ENCODE measurements at regions of chr15 and their contacts with region 1.

Region 1: DNA sequence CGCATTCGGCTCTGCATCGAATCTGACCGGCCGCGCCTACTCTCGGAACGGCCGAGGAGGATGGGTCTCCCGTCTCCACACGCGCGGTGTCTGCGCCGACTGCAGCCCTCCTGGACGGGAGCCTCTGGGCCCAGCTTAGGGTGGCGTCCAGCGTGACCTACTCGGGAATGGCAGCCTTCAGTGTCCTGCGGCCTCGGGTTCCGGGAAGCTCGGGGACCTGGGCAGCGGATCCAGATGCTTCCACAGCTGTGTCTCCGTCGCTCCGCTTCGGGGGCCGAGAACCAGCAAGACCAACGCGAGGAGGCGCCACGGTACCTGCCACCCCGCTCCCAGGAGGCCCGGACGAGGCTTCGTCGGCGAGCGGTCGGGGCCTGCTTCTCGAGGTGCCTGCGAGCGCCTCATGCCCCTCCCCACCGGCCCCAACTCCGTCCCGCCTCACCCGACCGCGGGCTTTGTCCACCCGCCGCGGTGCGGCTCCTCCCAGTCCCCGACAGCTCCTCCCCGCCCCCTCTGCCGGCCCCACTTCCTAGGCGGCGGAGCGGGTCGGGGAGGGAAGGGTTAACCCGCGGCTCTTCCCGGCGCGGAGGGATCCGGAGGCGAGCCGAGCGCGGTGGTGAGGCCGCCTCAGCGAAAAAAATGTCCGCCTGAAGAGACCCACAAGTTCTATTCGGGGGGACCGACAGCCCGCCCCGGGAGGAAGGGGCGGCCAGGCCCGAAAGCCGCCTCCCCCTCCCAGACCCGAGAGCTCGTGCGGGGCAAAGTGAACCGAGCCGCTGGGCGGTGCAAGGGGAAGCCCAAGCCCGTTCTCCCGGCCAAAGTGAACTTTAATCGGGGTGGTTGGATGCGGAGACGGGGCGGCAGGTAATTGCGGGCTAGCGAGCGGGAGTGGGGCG is at the start of gene TCF12:
- DNase-seq: peak; percentile 78 to 95 (median 84)
- ATAC-seq: peak; percentile 75
- H3K4me3 ChIP-seq: peak within 1 kb of the TSS; percentile 82
- H3K4me3 Mint-ChIP-seq: peak within 1 kb of the TSS; percentile 95
- H3K27ac ChIP-seq: peak within 1 kb of the TSS; percentile 68 to 71
- H3K27ac Mint-ChIP-seq: peak within 1 kb of the TSS; percentile 91
- H3K4me1 ChIP-seq: peaks cover 28% of the 10 kb centered on the region
- H3K4me1 Mint-ChIP-seq: peaks cover 49% of the 10 kb centered on the region
- H3K27me3 ChIP-seq: no peaks in the 10 kb centered on the region
- H3K27me3 Mint-ChIP-seq: no peaks in the 10 kb centered on the region
- CTCF ChIP-seq: peak; percentile 56
- total RNA-seq, gene TCF12: 54.0 TPM

Region 2: DNA sequence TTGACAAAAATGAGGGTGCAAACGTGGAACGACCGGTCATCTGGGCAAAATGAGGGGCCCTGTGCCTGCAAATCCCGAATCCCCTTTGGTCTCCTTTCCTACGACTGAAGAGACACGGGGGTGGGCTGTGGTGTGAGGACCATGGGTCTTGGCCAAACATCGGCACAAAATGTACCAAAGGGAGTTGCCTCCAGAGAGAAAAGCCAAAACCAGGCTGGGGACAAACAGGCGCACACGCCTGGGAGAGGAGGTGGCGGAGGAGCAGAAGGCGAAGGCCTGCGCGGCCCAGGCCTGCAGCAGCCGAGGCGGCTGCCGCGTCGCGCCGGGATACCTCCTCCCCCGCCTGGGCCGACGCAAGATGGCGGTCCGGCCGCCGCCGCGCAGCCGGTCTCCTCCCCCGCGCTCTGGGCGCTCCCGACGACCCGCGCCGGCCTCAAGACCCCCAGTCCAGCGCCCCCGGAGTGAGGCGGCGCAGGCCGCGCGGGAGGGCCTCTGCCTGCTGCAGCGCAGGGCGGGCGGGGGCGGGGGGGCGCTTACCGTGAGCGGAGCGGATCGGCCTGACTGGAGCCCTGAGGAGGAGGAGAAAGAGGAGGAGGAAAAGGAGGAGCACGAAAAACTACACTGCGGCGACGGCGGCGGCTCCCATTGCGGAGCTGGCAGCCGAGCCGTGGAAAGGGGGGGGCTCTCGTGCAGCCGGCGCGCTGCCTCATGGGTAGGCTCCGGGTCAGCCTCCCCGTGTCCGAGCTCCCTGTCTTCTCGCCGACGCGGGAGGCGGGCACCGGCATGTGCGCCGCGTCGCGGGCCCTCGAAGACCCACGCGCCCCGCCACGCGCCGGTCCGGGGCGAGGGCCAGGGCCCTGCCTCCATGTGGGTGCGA is 185.1 kb before region 1 on chr15 and contains the start of gene ZNF280D:
- CTCF ChIA-PET with region 1: no interaction called
- POLR2A ChIA-PET with region 1: interaction called, 13 read pairs
- intact Hi-C with region 1: loop called in 1 of 2 experiments (anchors 10 kb)
- DNase-seq: peak; percentile 65 to 91 (median 74)
- ATAC-seq: peak; percentile 87
- H3K4me3 ChIP-seq: peak within 1 kb of the TSS; percentile 79
- H3K4me3 Mint-ChIP-seq: peak within 1 kb of the TSS; percentile 89
- H3K27ac ChIP-seq: peak within 1 kb of the TSS in 1 of 2 donors; percentile 48
- H3K27ac Mint-ChIP-seq: peak within 1 kb of the TSS; percentile 92
- H3K4me1 ChIP-seq: peaks cover 27% of the 10 kb centered on the region
- H3K4me1 Mint-ChIP-seq: peaks cover 42% of the 10 kb centered on the region
- H3K27me3 ChIP-seq: no peaks in the 10 kb centered on the region
- H3K27me3 Mint-ChIP-seq: no peaks in the 10 kb centered on the region
- CTCF ChIP-seq: no peak
- total RNA-seq, gene ZNF280D: 27.2 to 30.3 TPM

Region 3: DNA sequence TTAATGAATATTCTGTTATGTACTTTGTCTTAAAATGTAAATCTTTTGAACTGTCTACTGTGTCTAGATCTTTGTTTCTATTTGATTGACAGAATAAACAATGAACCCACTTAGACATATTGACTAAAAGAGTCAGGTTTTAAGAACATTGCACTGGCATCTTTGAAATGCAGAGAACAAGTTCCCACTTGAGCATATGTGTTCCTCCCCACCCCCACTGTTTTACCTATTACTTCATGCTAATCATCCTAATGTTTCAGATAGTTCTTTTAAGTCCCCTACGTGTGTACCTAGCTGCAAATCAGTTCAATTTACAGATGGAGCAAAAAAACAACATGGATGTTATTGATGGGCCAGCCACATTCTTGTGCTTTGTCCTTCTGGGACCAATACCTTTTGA is 11.5 kb before region 1 on chr15:
- CTCF ChIA-PET with region 1: no interaction called
- POLR2A ChIA-PET with region 1: interaction called, 17 read pairs
- intact Hi-C with region 1: no loop called
- DNase-seq: no peak
- ATAC-seq: no peak
- H3K4me3 ChIP-seq: peak overlapping the region; percentile 39
- H3K4me3 Mint-ChIP-seq: peak overlapping the region; percentile 62
- H3K27ac ChIP-seq: no peak overlapping the region
- H3K27ac Mint-ChIP-seq: no peak overlapping the region
- H3K4me1 ChIP-seq: no peaks in the 10 kb centered on the region
- H3K4me1 Mint-ChIP-seq: peaks cover 18% of the 10 kb centered on the region
- H3K27me3 ChIP-seq: no peaks in the 10 kb centered on the region
- H3K27me3 Mint-ChIP-seq: no peaks in the 10 kb centered on the region
- CTCF ChIP-seq: no peak

Region 4: GRCh38 chr15:56957812-56958406 is 39.6 kb after region 1 on chr15:
- CTCF ChIA-PET with region 1: no interaction called
- POLR2A ChIA-PET with region 1: interaction called, 6 read pairs
- intact Hi-C with region 1: loop called in 1 of 2 experiments (anchors 5 kb)
- DNase-seq: no peak
- ATAC-seq: peak; percentile 34
- H3K4me3 ChIP-seq: no peak overlapping the region
- H3K4me3 Mint-ChIP-seq: peak overlapping the region; percentile 11
- H3K27ac ChIP-seq: no peak overlapping the region
- H3K27ac Mint-ChIP-seq: no peak overlapping the region
- H3K4me1 ChIP-seq: peaks cover 4% of the 10 kb centered on the region
- H3K4me1 Mint-ChIP-seq: peaks cover 57% of the 10 kb centered on the region
- H3K27me3 ChIP-seq: no peaks in the 10 kb centered on the region
- H3K27me3 Mint-ChIP-seq: no peaks in the 10 kb centered on the region
- CTCF ChIP-seq: no peak

Region 5: DNA sequence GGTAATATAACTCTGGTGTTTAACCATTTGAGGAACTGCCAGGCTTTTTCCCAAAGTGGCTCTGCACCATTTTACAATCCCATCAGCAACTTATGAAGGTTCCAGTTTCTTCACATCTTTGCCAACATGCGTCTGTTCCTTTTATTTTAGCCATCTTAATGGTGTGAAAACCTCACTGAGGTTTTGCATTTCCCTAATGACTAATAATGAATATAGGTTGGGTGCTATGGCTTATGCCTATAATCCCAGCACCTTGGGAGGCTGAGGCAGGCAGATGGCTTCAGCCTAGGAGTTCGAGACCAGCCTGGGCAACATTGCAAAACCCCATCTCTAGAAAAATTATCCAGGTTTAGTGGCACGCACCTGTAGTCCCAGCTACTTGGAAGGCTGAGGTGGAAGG is 210.8 kb after region 1 on chr15:
- CTCF ChIA-PET with region 1: no interaction called
- POLR2A ChIA-PET with region 1: no interaction called
- intact Hi-C with region 1: loop called in 1 of 2 experiments (anchors 5 kb)
- DNase-seq: no peak
- ATAC-seq: no peak
- H3K4me3 ChIP-seq: no peak overlapping the region
- H3K4me3 Mint-ChIP-seq: no peak overlapping the region
- H3K27ac ChIP-seq: no peak overlapping the region
- H3K27ac Mint-ChIP-seq: no peak overlapping the region
- H3K4me1 ChIP-seq: no peaks in the 10 kb centered on the region
- H3K4me1 Mint-ChIP-seq: peaks cover 53% of the 10 kb centered on the region
- H3K27me3 ChIP-seq: no peaks in the 10 kb centered on the region
- H3K27me3 Mint-ChIP-seq: no peaks in the 10 kb centered on the region
- CTCF ChIP-seq: no peak

Region 6: GRCh38 chr15:57306161-57306943 is 388.1 kb after region 1 on chr15:
- CTCF ChIA-PET with region 1: interaction called, 3 read pairs
- POLR2A ChIA-PET with region 1: no interaction called
- intact Hi-C with region 1: loop called (anchors 5 to 10 kb)
- DNase-seq: peak; percentile 64 to 88 (median 80)
- ATAC-seq: peak; percentile 81
- H3K4me3 ChIP-seq: peak overlapping the region; percentile 54
- H3K4me3 Mint-ChIP-seq: peak overlapping the region; percentile 51
- H3K27ac ChIP-seq: no peak overlapping the region
- H3K27ac Mint-ChIP-seq: no peak overlapping the region
- H3K4me1 ChIP-seq: peaks cover 11% of the 10 kb centered on the region
- H3K4me1 Mint-ChIP-seq: no peaks in the 10 kb centered on the region
- H3K27me3 ChIP-seq: no peaks in the 10 kb centered on the region
- H3K27me3 Mint-ChIP-seq: no peaks in the 10 kb centered on the region
- CTCF ChIP-seq: peak; percentile 84